Adrenal gland (tissue), 19 donors: ENCODE measurements at regions of chr2 and their contacts with region 1.

Region 1: GRCh38 chr2:179336818-179337534 is 72.3 kb upstream of the SESTD1 start:
- DNase-seq: no peak
- H3K4me3 ChIP-seq: no peak overlapping the region
- H3K27ac ChIP-seq: no peak overlapping the region
- H3K4me1 ChIP-seq: no peaks in the 10 kb centered on the region
- H3K27me3 ChIP-seq: no peaks in the 10 kb centered on the region
- CTCF ChIP-seq: no peak
- POLR2A ChIP-seq: no peak

Region 2: DNA sequence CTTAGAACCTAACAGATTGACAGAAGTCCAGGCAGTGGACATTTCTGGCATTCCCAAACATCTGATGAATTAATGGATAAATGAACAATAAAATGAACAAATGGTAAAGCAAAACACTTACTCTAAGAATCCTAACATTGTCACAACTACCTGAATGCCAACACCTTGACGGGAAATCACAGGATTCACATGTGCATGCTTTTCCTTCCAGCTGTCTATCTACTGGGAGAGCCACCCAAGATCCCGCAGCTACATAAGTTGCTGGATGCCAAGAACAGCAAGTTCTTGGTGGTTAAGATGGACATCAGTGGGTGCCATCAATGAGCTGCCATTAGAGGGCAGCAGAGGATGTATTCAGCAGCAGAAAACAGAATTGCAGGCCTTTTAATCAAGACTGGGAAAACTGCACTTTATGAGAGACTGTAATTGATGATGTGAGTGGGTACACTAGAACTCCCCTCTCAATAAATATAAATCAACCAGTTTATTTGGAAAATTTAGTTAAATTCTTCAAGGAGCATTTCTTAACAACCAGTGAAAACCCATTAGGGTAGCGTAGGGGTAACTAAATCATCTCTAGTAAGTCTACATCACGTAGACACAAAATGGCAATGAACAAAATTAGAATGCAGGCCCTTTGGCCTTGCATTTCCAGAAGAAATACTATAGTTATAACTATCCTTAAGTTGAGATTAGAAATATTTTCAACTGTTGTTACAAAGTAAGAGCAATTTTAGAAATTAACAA is 118.0 kb before region 1 on chr2:
- intact Hi-C with region 1: loop called in 1 of 2 experiments (anchors 5 kb)
- DNase-seq: peak; percentile 54 to 90 (median 71)
- H3K4me3 ChIP-seq: no peak overlapping the region
- H3K27ac ChIP-seq: no peak overlapping the region
- H3K4me1 ChIP-seq: peaks cover 0 to 8% of the 10 kb centered on the region in 2 donors
- H3K27me3 ChIP-seq: no peaks in the 10 kb centered on the region
- CTCF ChIP-seq: peak; percentile 72 to 92 (median 79)
- POLR2A ChIP-seq: no peak

Region 3: DNA sequence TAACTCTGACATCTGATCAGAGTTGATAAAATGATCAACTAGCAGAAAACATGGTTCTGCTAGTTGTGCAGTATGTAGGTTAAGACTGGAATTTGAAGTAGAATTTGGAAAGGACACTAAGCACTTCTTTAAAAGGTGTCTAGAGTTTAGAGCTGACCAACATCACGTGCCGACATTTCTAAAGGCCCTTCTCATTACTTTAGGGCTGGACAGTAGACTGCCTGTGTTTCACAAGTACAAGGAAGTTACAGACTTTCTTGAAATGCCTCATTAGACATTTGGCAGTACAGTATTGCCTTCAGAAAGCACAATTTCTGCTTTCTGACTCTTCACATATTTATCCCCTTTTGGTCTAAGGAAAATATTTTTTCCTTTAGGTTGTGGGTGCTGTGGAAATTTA is 269.2 kb after region 1 on chr2:
- intact Hi-C with region 1: no loop called
- DNase-seq: no peak
- H3K4me3 ChIP-seq: no peak overlapping the region
- H3K27ac ChIP-seq: no peak overlapping the region
- H3K4me1 ChIP-seq: peaks cover 0 to 12% of the 10 kb centered on the region in 2 donors
- H3K27me3 ChIP-seq: no peaks in the 10 kb centered on the region
- CTCF ChIP-seq: no peak
- POLR2A ChIP-seq: no peak